Head of caudate nucleus (tissue), 42 donors: ENCODE measurements at regions of chr10 and their contacts with region 1.

Region 1: GRCh38 chr10:74826142-74827044 is at the start of gene KAT6B:
- DNase-seq: peak; percentile 100

Region 2: DNA sequence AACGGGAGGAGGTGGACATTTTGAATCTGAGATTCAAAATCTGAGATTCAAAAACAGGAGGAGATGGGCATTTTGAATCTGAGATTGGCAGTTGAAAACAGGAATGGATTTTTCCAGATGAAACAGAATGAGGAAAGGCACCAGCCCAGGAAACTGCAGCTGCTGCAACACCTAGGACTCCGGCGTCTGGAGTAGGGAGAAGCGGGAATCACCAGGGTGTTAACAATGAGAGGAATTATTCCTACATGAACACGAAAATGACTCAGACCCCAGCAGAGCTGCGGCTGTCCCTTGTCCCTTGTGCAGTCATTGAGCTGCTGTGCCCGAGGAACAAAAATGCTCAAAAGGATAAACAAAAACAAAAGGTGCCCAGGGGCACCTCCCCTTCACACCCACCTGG is 59.9 kb before region 1 on chr10:
- intact Hi-C with region 1: no loop called
- DNase-seq: no peak

Region 3: DNA sequence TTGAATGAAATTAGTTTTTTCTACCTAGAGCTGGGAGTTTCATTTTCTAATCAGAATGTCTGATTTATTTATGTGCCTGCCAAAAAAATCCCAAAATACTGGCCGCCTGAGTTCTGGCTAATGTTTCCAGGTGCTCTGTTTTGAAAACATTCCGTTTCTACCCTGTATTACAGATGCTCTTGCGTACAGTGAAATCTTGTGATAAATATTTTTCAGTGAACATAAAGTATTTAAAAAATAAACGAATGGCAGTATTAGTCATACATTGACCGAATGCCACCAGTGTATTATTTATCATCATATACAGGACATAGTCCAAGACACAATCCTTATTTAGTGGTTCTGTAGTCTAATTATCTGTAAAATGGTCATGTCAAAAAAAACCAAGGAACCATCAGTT is 102.8 kb after region 1 on chr10:
- intact Hi-C with region 1: loop called (anchors 5 kb)
- DNase-seq: no peak

Region 4: GRCh38 chr10:75019370-75019769 is 193.0 kb after region 1 on chr10:
- intact Hi-C with region 1: loop called (anchors 10 kb)
- DNase-seq: peak in 2 of 42 donors; percentile 28 to 55

Region 5: DNA sequence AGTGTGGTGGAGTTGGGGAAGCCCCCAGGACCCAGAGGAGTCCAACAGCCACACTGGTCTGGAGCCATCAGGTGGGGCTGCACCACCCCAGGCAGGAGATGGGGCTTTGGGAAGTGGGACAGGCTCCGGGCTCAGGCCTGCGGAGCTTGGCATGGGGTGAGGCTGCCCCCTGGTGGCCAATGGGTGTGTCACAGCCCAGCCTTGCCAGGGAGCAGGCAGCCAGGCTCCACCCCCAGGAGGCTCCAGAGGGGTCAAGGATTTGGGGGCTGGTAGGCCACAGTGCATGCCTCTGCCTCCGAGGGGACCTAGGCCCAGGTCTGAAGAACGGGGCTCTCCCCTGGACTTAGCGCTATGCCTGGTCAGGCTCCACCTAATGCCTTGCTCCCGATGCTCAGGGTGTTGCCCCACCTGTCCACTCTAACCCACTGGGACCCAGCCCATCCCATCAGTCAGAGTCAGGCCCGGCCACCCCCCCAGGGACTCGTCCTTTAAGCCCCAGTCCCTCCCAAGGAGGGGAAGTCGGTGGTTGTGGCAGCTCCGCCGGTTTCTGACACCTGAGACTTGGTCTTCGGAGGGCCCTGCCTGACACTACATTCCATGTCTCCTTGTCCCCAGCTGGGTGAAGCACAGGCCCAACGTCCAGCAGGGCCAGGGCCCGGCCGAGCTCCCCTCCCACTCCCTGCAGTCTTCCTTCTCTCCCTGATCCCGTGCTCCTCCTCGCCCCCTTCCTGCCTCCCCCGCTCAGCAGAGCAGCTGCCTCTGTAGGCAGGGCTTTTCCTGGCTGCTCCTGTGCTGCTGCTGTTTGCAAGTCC is 273.8 kb after region 1 on chr10:
- intact Hi-C with region 1: loop called (anchors 10 kb)
- DNase-seq: peak; percentile 71 to 94 (median 84)

Region 6: GRCh38 chr10:75210282-75211006 is 384.1 kb after region 1 on chr10 and contains the start of gene VDAC2:
- intact Hi-C with region 1: loop called (anchors 10 kb)
- DNase-seq: peak; percentile 73 to 97 (median 93)